ENCODE measurements at regions of chr17 and their contacts with region 1.

Region 1: GRCh38 chr17:21457051-21458026 is 81.2 kb downstream of the KCNJ12 start:
- DNase-seq: peak; percentile 86
- H3K4me3 Mint-ChIP-seq: no peak overlapping the region
- H3K27ac Mint-ChIP-seq: no peak overlapping the region
- H3K4me1 Mint-ChIP-seq: peaks cover 7% of the 10 kb centered on the region
- H3K27me3 Mint-ChIP-seq: peaks cover 26% of the 10 kb centered on the region

Region 2: DNA sequence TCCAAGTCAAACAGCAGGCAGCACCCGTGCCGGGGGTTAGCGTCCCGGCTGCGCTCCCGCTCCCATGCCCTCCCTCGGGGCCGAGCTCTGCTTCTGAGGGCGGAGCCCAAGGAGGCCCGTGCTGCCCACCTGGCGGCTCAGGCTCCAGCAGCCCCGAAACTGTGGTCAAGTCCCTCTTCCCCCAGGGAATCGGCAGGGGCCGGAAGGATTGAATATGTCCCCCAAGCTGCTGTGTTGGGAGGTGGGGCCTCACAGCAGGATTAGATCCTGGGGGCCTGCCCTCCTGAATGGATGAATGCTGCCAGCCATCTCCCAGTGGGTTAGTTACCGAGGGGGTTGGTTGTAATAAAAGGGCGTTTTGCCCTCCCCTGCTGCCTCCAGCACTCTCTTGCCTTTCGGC is 138.9 kb before region 1 on chr17:
- intact Hi-C with region 1: loop called (anchors 10 kb)
- DNase-seq: no peak
- H3K4me3 Mint-ChIP-seq: no peak overlapping the region
- H3K27ac Mint-ChIP-seq: no peak overlapping the region
- H3K4me1 Mint-ChIP-seq: peaks cover 4% of the 10 kb centered on the region
- H3K27me3 Mint-ChIP-seq: peaks cover 4% of the 10 kb centered on the region

Region 3: DNA sequence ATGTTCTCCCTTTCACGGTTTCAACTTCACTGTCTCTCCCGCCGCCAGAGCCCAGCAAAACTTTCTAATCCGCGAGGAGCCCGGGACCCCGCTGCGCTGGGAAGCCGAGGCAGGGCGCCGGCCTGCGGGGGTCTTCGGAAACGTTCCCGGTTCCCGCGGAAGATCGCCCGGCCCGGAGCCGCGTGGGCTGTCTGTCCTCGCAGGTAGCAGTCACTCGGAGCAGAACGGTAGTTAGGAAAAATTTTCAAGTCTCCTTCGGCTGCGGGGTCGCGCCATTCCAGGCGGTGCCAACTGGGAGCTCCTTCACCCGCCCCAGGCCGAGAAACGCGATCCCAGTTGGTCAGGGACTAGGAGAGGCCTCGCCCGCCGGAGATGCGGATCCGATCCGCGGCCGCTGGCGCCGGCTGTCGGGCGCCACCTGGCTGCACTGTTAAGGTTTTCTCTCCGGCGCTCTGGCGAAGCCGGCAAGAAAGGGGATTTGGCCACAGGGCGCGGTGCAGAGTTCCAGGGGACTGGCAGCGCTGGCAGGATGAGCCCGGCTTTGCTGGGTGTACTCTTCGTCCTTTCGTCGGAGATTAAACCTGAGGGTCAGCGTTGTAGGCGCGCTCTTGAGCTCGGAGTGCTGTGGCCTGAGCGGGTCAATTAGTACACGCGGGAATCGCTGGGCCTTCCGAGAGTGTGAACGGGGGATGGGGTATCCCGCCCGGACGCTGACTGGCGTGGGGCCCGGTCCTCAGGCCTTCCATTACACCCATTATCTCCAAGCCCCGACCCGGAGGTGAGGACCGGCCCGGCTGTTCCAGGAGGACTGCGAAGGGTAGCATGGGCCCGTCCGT is 54.2 kb after region 1 on chr17:
- intact Hi-C with region 1: loop called (anchors 1 kb)
- DNase-seq: peak; percentile 43
- H3K4me3 Mint-ChIP-seq: peak overlapping the region; percentile 54
- H3K27ac Mint-ChIP-seq: no peak overlapping the region
- H3K4me1 Mint-ChIP-seq: peaks cover 14% of the 10 kb centered on the region
- H3K27me3 Mint-ChIP-seq: peaks cover 57% of the 10 kb centered on the region

Measured in activated T-helper 2 cell treated with anti-CD3 and anti-CD28 coated beads, Interferon-gamma antibody, Interleukin-2, Interleukin-4, amounts not matched to agents 10 μg/mL and 5 μg/mL and 100 μg/mL, durations not matched to agents 14 hours and 24 hours and 36 hours (primary cell).